Right cardiac atrium (tissue), 5 donors: ENCODE measurements at regions of chr11 and their contacts with region 1.

Region 1: GRCh38 chr11:122202951-122203456 is 87.0 kb upstream of the BLID start:
- DNase-seq: peak; percentile 64 to 87 (median 84)
- ATAC-seq: peak; percentile 82 to 85
- H3K4me3 ChIP-seq: peak overlapping the region; percentile 12
- H3K27ac ChIP-seq: peak overlapping the region; percentile 2
- H3K4me1 ChIP-seq: peaks cover 11% of the 10 kb centered on the region
- H3K27me3 ChIP-seq: no peaks in the 10 kb centered on the region

Region 2: DNA sequence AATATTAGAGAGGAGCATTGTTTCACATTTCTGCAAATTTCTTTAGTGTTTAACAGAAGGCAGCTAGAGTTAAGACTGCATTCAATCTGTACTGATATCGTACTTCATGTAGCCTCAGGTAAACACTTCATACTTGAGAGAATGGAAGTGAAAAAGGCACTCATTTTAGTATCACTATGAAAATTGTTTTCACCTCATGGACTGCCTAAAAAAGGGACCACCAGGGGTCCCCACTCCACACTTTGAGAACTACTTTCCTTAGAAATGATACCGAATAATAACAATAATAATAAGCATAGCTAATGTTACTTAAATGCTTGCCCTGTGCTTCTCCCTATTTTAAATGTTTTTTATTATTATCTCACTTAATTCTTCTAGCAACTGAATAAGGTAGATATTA is 182.1 kb before region 1 on chr11:
- intact Hi-C with region 1: loop called in 3 of 4 experiments (anchors 5 to 10 kb)
- DNase-seq: peak in 1 of 3 donors; percentile 68
- ATAC-seq: no peak
- H3K4me3 ChIP-seq: no peak overlapping the region
- H3K27ac ChIP-seq: no peak overlapping the region
- H3K4me1 ChIP-seq: no peaks in the 10 kb centered on the region
- H3K27me3 ChIP-seq: no peaks in the 10 kb centered on the region

Region 3: GRCh38 chr11:122069707-122070360 is 133.2 kb before region 1 on chr11:
- intact Hi-C with region 1: no loop called
- DNase-seq: peak; percentile 69 to 91 (median 74)
- ATAC-seq: peak in 1 of 2 donors; percentile 36
- H3K4me3 ChIP-seq: no peak overlapping the region
- H3K27ac ChIP-seq: no peak overlapping the region
- H3K4me1 ChIP-seq: peaks cover 2% of the 10 kb centered on the region
- H3K27me3 ChIP-seq: no peaks in the 10 kb centered on the region

Region 4: DNA sequence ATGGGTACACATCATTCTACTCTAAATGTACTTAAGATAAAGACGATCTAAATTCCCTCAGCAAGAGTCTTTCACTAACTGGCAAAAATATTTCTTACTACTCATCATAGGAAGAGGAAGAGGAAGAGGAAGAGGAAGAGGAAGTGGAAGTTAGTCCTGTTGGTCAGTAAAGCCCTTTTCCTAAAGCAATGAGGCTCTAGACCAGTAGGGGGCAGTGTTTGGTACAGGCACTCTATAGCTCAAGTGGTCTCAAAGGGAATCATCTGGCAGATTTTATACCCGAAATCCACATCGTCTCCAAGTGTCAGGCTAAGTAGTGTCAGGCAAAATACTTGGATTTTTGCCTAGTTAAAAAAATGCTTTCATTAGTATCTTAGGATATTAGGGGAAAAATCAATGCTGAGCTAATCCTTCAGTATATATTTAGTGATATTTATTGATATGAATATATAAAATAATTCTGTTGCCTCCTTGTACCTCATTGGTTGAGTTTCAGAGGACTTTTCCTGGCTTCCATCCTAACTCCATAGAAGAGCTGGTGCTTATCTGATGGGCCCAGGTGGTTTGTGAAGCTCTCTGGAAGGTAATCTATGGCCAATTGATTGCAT is 94.7 kb before region 1 on chr11:
- intact Hi-C with region 1: loop called (anchors 5 to 10 kb)
- DNase-seq: no peak
- ATAC-seq: no peak
- H3K4me3 ChIP-seq: no peak overlapping the region
- H3K27ac ChIP-seq: peak overlapping the region; percentile 77
- H3K4me1 ChIP-seq: no peaks in the 10 kb centered on the region
- H3K27me3 ChIP-seq: no peaks in the 10 kb centered on the region